ENCODE measurements at regions of chr1 and their contacts with region 1.

Region 1: GRCh38 chr1:54218883-54219687 is 19.1 kb downstream of the MRPL37 start:
- DNase-seq: peak; percentile 59 to 64
- H3K4me3 ChIP-seq: no peak overlapping the region
- H3K27ac ChIP-seq: peak overlapping the region; percentile 70 to 87 (median 75)
- H3K4me1 ChIP-seq: peaks cover 26 to 41% (median 32%) of the 10 kb centered on the region in 4 donors
- H3K27me3 ChIP-seq: no peaks in the 10 kb centered on the region
- CTCF ChIP-seq: no peak
- EP300 ChIP-seq: no peak
- POLR2A ChIP-seq: no peak

Region 2: GRCh38 chr1:54091666-54092065 is 127.4 kb before region 1 on chr1:
- intact Hi-C with region 1: no loop called
- DNase-seq: no peak
- H3K4me3 ChIP-seq: no peak overlapping the region
- H3K27ac ChIP-seq: peak overlapping the region in 1 of 5 donors; percentile 85
- H3K4me1 ChIP-seq: peaks cover 16 to 37% (median 18%) of the 10 kb centered on the region in 4 donors
- H3K27me3 ChIP-seq: no peaks in the 10 kb centered on the region
- CTCF ChIP-seq: no peak
- EP300 ChIP-seq: no peak
- POLR2A ChIP-seq: no peak

Region 3: DNA sequence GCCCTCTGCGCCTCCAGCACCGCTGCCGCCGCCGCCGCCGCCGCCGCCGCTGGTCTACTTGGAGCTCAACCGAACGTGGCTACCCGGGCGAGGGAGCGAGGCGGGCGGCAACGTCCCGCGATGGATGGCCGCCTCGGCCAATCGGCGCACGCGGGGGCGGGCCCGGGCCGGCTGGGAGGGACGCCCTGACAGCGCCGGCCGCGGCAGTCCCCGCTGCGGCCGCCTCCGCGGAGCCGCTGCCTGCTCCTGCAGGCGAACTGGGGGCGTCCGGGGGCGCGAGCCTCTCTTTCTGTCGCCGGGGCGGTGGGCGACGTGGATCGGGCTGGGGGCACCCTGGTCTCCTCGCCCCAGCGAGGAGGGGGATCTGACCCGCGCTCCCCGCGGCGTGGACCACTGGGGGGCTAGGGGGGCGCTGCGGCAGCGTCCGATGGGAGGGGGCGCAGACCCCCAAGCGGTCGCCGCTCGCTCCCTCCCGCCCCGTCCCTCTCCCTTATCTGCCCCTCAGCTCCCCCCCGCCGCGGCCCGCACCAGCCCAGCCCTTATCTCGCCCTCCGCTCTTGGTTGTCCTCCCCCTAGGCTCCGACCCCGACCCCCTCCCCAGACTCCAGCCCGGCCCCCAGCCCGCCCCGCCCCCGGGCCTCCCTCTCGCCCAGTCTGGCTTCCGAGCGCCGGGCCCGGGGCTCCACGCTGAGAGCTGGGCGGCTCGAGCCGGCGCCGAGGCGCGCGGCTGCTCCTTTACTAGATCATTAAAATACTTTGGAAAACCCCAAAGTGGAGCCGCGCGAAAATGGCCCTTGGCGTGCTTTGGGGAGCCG is 187.5 kb after region 1 on chr1 and contains the start of gene SSBP3:
- intact Hi-C with region 1: loop called (anchors 10 kb)
- DNase-seq: peak; percentile 95 to 98
- H3K4me3 ChIP-seq: peak within 1 kb of the TSS; percentile 87 to 97 (median 94)
- H3K27ac ChIP-seq: peak within 1 kb of the TSS; percentile 90 to 97 (median 95)
- H3K4me1 ChIP-seq: peaks cover 47 to 74% (median 66%) of the 10 kb centered on the region in 4 donors
- H3K27me3 ChIP-seq: no peaks in the 10 kb centered on the region
- CTCF ChIP-seq: no peak
- EP300 ChIP-seq: no peak
- POLR2A ChIP-seq: peak in 1 of 4 donors; percentile 36
- total RNA-seq, gene SSBP3: 4.3 to 77.6 (median 20.0) TPM